Right cardiac atrium (tissue), 5 donors: ENCODE measurements at regions of chr15 and their contacts with region 1.

Region 1: GRCh38 chr15:84929744-84930371 is 45.4 kb downstream of the SLC28A1 start:
- DNase-seq: no peak
- ATAC-seq: no peak
- H3K4me3 ChIP-seq: no peak overlapping the region
- H3K27ac ChIP-seq: no peak overlapping the region
- H3K4me1 ChIP-seq: peaks cover 4% of the 10 kb centered on the region
- H3K27me3 ChIP-seq: no peaks in the 10 kb centered on the region

Region 2: GRCh38 chr15:84863565-84864443 is 66.1 kb before region 1 on chr15:
- intact Hi-C with region 1: loop called in 3 of 4 experiments (anchors 5 to 10 kb)
- DNase-seq: no peak
- ATAC-seq: peak; percentile 65 to 73
- H3K4me3 ChIP-seq: no peak overlapping the region
- H3K27ac ChIP-seq: peak overlapping the region; percentile 19
- H3K4me1 ChIP-seq: peaks cover 2% of the 10 kb centered on the region
- H3K27me3 ChIP-seq: no peaks in the 10 kb centered on the region

Region 3: GRCh38 chr15:85010386-85011159 is 80.7 kb after region 1 on chr15:
- intact Hi-C with region 1: no loop called
- DNase-seq: no peak
- ATAC-seq: peak; percentile 57 to 86
- H3K4me3 ChIP-seq: no peak overlapping the region
- H3K27ac ChIP-seq: peak overlapping the region; percentile 90
- H3K4me1 ChIP-seq: peaks cover 16% of the 10 kb centered on the region
- H3K27me3 ChIP-seq: no peaks in the 10 kb centered on the region